ENCODE measurements at regions of chr3 and their contacts with region 1.

Region 1: GRCh38 chr3:138761002-138761401 is 73.7 kb downstream of the PIK3CB start:
- DNase-seq: no peak

Region 2: DNA sequence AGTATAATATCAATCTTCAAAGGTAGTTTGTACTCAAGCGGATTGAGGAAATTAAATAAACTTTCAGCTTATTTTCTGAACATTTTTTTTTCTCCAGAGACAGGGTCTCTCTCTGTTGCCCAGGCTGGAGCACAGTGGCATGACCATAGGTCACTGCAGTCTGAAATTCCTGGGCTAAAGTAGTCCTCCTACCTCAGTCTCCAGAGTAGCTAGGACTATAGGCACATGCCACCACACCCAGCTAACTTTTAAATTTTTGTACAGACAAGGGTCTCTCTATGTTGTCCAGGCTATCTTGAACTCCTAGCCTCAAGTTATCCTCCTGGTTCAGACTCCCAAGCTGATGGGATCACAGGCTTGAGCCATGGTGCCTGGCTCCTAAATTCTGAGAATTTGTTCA is 55.3 kb before region 1 on chr3:
- intact Hi-C with region 1: loop called in 1 of 2 experiments (anchors 2 kb)
- DNase-seq: no peak

Region 3: GRCh38 chr3:138724443-138724842 is 36.6 kb before region 1 on chr3:
- intact Hi-C with region 1: no loop called
- DNase-seq: no peak

Region 4: GRCh38 chr3:139230391-139230790 is 469.4 kb after region 1 on chr3:
- intact Hi-C with region 1: no loop called
- DNase-seq: no peak

Measured in posterior vena cava (tissue), 2 donors.